ENCODE measurements at regions of chr6 and their contacts with region 1.

Region 1: DNA sequence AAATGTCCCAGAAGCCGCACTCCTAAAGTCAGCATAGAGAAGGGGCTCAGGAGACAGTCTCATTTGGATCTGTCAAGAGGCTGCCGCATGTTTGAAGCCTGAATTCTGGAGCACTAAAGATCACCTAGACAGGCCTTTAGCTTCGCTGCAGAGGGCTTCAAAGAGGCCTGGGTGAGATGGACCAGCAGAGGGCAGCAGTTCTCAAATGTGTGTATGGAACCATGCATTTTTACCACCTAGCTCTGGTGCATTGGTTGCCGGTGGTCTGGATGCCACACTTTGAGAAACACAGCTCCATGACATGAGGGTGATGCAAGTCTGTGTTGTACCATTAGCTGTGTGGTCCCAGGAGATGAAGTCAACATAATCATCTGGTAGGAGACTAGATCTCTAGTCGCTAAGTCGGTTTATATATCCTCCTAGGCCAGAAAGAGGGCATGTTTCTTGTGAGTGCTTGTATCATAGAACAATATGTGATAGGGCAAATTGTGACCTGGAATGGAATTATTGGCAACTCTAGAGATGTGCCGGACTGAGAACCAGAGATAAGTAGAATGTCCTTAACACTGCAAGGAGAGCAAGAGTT is 64.8 kb downstream of the KIAA0319 start:
- DNase-seq: peak; percentile 77
- H3K4me3 ChIP-seq: no peak overlapping the region
- H3K27ac ChIP-seq: no peak overlapping the region
- H3K4me1 ChIP-seq: peaks cover 4% of the 10 kb centered on the region; the same call in 1 of the 2 replicates
- H3K27me3 ChIP-seq: no peaks in the 10 kb centered on the region; the same call in 1 of the 2 replicates

Region 2: DNA sequence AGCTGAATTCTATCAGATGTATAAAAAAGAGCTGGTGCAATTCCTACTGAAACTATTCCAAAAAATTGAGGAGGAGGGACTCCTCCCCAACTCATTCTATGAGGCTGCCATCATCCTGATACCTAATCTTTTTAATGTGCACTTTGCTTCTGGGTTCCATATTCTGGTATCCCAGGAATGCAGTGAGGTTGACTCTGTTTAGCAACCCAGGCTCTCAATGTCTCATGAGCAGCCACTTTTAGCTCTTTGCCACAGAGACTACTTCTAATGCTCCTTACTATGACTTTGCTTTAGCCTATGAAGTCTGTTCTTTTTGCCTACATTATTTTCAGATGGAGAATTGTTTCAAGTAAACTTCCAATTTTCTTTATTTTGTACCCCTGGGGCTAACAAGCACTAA is 640.7 kb before region 1 on chr6:
- in situ Hi-C with region 1: no loop called
- DNase-seq: peak; percentile 8
- H3K4me3 ChIP-seq: no peak overlapping the region
- H3K27ac ChIP-seq: no peak overlapping the region
- H3K4me1 ChIP-seq: no peaks in the 10 kb centered on the region
- H3K27me3 ChIP-seq: no peaks in the 10 kb centered on the region

Region 3: DNA sequence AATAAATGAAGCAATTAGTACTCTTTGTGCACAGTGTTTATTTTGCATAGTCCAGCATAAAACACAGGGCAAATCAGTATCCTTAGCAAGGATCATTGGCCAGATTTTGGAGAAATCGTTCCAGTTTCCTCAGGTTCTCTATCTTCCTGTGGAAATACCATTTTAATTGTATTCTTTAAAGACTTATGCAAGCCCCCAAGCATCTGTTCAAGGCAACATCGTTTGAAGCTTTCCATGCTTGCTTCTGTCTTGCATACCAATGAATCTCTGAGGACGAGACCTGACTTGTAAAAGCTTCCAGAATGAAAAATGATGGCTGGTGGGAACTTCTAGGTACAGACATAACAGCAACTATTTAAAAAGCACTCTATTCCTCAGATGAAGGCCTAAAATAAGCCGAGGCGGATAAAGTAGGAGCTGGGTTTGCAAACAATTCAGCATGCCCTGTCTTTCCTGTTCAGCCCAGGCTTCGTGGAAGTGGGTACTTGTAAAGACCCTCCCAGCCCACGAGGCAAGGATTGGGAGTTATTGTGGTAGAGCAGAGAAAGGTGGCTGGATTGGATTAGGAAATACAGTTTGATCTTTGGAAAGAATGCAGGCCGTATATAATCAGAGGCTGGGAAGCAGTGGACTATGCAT is 433.5 kb before region 1 on chr6:
- in situ Hi-C with region 1: no loop called
- DNase-seq: no peak
- H3K4me3 ChIP-seq: no peak overlapping the region
- H3K27ac ChIP-seq: no peak overlapping the region
- H3K4me1 ChIP-seq: no peaks in the 10 kb centered on the region
- H3K27me3 ChIP-seq: no peaks in the 10 kb centered on the region

Region 4: DNA sequence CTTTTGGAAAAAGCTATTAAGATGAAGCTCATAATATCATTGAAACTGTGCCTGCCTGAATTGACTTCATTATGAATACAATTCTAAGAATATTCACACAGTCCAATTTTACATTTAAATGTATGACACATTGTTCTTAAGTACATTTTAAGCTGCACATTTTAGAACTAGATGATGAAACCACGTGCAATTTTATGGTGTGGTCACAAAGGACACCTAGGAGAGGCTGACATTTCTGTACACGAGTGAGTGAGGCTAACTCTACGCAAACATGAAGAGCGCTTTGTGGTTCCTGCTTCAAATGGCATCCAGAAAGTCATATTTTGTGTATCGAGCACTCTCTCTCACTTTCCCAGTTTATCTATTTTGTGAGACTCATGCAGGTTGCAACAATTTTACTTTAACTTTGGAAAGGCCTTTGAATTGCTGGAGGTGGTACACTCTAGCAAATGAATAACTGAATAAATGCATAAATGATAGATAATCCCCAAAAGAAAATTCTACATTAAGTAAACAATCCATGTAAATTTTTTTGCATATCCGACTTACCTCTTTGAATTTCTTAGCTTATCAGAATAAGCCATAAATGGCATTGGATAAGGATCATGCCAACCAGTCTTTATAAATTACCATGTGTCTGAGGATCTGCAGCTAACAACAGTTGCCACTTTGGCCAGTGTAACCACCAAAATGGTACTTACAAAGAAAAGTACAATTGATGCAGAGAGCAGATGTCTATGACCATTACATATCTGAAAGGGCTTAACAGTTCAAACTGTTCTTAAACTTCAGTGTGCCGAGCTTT is 357.9 kb before region 1 on chr6:
- in situ Hi-C with region 1: no loop called
- DNase-seq: peak; percentile 27
- H3K4me3 ChIP-seq: no peak overlapping the region
- H3K27ac ChIP-seq: no peak overlapping the region
- H3K4me1 ChIP-seq: peaks cover 12% of the 10 kb centered on the region
- H3K27me3 ChIP-seq: no peaks in the 10 kb centered on the region

Region 5: DNA sequence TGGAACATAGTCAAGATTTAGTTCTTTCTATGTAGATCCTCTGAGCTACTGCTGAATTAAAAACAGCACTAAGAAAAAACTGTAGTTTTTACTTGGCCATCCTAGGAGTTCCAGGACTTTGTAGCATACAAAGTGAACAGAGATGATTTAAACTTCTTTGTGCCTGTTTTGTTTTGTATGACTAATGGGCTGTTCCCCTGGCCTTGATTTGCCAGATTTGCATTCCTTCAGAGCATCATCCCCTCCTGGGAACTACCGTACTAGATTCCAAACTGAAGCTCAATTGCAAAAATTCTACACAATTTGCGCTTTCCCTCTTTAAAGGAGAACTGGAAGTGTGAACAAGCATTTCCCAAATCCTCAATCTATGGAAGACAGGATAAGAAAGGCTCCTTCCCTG is 108.8 kb after region 1 on chr6:
- in situ Hi-C with region 1: loop called (anchors 5 kb)
- DNase-seq: peak; percentile 55
- H3K4me3 ChIP-seq: no peak overlapping the region
- H3K27ac ChIP-seq: no peak overlapping the region
- H3K4me1 ChIP-seq: 0 out of 2 replicates have a peak, but pooled peaks cover 6% of the 10 kb centered on the region
- H3K27me3 ChIP-seq: no peaks in the 10 kb centered on the region

Region 6: GRCh38 chr6:24761193-24761835 is 180.1 kb after region 1 on chr6:
- in situ Hi-C with region 1: loop called (anchors 5 kb)
- DNase-seq: no peak
- H3K4me3 ChIP-seq: no peak overlapping the region
- H3K27ac ChIP-seq: no peak overlapping the region
- H3K4me1 ChIP-seq: no peaks in the 10 kb centered on the region
- H3K27me3 ChIP-seq: no peaks in the 10 kb centered on the region

Region 7: GRCh38 chr6:24933868-24934401 is 352.8 kb after region 1 on chr6:
- in situ Hi-C with region 1: no loop called
- DNase-seq: peak; percentile 19
- H3K4me3 ChIP-seq: no peak overlapping the region
- H3K27ac ChIP-seq: no peak overlapping the region
- H3K4me1 ChIP-seq: peaks cover 27% of the 10 kb centered on the region
- H3K27me3 ChIP-seq: no peaks in the 10 kb centered on the region

Measured in GM23248 (cell line).